ENCODE measurements at regions of chr11 and their contacts with region 1.

Region 1: DNA sequence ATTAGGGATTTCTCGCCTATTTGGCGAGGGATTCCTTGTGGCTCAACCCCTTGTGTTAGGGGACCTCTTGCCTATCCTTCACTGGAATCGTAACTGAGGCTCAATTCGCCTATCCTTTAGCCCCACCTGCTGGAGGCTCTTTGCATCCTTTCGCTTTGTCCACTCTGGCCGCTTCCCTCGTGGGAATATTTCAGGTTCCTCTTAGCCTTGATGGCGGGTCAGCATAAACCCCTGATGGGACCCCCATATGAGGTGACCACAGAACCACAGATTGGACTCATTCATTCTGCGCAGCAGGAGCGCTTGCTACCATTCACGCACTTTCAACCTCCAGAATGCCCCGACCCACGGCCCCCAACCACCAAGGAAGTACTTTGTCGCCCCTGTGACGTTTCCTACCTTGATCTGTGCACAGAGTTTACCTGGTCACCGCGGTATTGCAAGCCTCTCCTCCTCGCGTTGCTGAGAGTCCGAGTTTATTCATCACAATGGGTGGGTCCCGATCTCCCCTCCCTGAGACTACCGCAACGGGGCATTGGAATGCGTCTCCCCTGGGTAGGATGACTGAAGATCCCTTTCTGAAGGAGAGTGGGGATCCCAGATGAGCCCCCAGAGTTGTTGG is at the start of gene OR52N2:
- DNase-seq: no peak
- H3K4me3 ChIP-seq: peak within 1 kb of the TSS; percentile 48 to 59 (median 50)
- H3K27ac ChIP-seq: no peak within 1 kb of the TSS
- H3K4me1 ChIP-seq: peaks cover 0 to 11% (median 10%) of the 10 kb centered on the region in 4 donors
- H3K27me3 ChIP-seq: peaks cover 0 to 9% (median 0%) of the 10 kb centered on the region in 4 donors
- CTCF ChIP-seq: peak; percentile 80 to 85 (median 84)
- EP300 ChIP-seq: no peak
- POLR2A ChIP-seq: no peak
- total RNA-seq, gene OR52N2: not detected

Region 2: GRCh38 chr11:5123802-5124521 is 684.6 kb before region 1 on chr11:
- intact Hi-C with region 1: loop called (anchors 5 kb)
- DNase-seq: no peak
- H3K4me3 ChIP-seq: no peak overlapping the region
- H3K27ac ChIP-seq: no peak overlapping the region
- H3K4me1 ChIP-seq: peaks cover 0 to 4% (median 0%) of the 10 kb centered on the region in 4 donors
- H3K27me3 ChIP-seq: no peaks in the 10 kb centered on the region
- CTCF ChIP-seq: peak; percentile 54 to 84 (median 66)
- EP300 ChIP-seq: no peak
- POLR2A ChIP-seq: no peak

Region 3: GRCh38 chr11:5476184-5476819 is 332.3 kb before region 1 on chr11:
- intact Hi-C with region 1: loop called (anchors 1 kb)
- DNase-seq: no peak
- H3K4me3 ChIP-seq: no peak overlapping the region
- H3K27ac ChIP-seq: no peak overlapping the region
- H3K4me1 ChIP-seq: no peaks in the 10 kb centered on the region
- H3K27me3 ChIP-seq: no peaks in the 10 kb centered on the region
- CTCF ChIP-seq: peak; percentile 60 to 77 (median 62)
- EP300 ChIP-seq: no peak
- POLR2A ChIP-seq: no peak

Region 4: GRCh38 chr11:5575152-5575551 is 233.5 kb before region 1 on chr11:
- intact Hi-C with region 1: no loop called
- DNase-seq: no peak
- H3K4me3 ChIP-seq: no peak overlapping the region
- H3K27ac ChIP-seq: no peak overlapping the region
- H3K4me1 ChIP-seq: no peaks in the 10 kb centered on the region
- H3K27me3 ChIP-seq: no peaks in the 10 kb centered on the region
- CTCF ChIP-seq: no peak
- EP300 ChIP-seq: no peak
- POLR2A ChIP-seq: no peak

Region 5: GRCh38 chr11:5600374-5600851 is 208.2 kb before region 1 on chr11:
- intact Hi-C with region 1: loop called (anchors 10 kb)
- DNase-seq: no peak
- H3K4me3 ChIP-seq: no peak overlapping the region
- H3K27ac ChIP-seq: peak overlapping the region; percentile 61 to 74 (median 72)
- H3K4me1 ChIP-seq: peaks cover 4 to 44% (median 33%) of the 10 kb centered on the region in 4 donors
- H3K27me3 ChIP-seq: no peaks in the 10 kb centered on the region
- CTCF ChIP-seq: peak; percentile 61 to 89 (median 63)
- EP300 ChIP-seq: no peak
- POLR2A ChIP-seq: no peak

Region 6: DNA sequence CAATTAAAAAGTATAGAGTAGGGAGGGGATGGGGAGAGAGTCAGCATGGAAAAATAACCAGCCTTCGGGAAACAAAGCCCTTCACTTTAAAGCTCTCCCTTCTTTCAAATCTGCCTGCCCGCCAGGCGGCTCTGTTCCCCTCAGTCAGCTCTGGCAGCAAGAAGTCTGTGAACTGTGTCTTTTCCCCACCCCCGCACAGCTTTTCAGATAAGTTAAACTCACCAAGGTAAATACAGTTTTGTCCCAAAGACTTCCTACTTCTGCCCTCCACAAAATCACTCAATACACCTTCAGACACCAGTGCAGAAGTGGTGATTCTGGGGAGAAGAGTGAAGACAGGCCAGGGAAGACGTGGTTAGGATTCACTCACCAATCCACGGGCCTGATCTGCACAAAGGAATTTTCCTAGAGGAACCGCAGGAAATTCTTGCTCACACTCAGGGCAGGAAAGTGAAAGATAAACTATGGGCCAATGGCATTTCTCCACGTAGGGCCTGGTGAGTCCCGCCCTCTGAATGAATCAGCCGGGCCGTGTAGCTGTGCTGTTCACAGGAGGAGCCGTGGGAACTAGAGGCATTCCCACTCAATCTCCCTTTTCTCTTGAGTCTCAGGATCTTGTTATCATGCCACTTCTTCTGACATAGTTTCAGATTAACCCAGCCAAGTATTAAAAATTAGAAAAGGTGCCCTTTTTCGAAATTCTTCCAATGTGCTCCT is 123.8 kb before region 1 on chr11 and contains the start of gene TRIM5:
- intact Hi-C with region 1: loop called (anchors 10 kb)
- DNase-seq: peak; percentile 95
- H3K4me3 ChIP-seq: peak within 1 kb of the TSS; percentile 45 to 65 (median 54)
- H3K27ac ChIP-seq: peak within 1 kb of the TSS; percentile 79 to 87 (median 87)
- H3K4me1 ChIP-seq: peaks cover 10 to 45% (median 39%) of the 10 kb centered on the region in 4 donors
- H3K27me3 ChIP-seq: no peaks in the 10 kb centered on the region
- CTCF ChIP-seq: peak; percentile 62 to 69 (median 67)
- EP300 ChIP-seq: no peak
- POLR2A ChIP-seq: no peak
- total RNA-seq, gene TRIM5: 15.9 to 21.5 (median 16.6) TPM

Region 7: DNA sequence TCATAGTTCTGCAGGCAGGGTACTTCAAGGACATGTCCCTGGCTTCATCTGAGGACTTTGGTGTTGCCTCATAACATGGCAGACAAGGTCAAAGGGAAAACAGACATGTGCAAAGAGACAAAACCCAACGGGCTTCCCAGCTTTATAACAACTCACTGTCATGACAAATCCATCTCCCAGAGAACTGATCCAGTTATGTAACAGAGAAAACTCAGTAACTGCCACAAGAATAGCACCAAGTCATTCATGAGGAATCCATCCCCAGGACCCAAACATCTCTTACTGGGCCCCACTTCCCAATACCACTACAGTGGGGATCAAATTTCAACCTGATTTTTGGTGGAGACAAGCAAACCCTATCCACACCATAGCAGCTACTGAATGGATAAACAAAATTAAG is 41.6 kb before region 1 on chr11:
- intact Hi-C with region 1: no loop called
- DNase-seq: no peak
- H3K4me3 ChIP-seq: no peak overlapping the region
- H3K27ac ChIP-seq: no peak overlapping the region
- H3K4me1 ChIP-seq: no peaks in the 10 kb centered on the region
- H3K27me3 ChIP-seq: no peaks in the 10 kb centered on the region
- CTCF ChIP-seq: no peak
- EP300 ChIP-seq: no peak
- POLR2A ChIP-seq: no peak

Region 8: DNA sequence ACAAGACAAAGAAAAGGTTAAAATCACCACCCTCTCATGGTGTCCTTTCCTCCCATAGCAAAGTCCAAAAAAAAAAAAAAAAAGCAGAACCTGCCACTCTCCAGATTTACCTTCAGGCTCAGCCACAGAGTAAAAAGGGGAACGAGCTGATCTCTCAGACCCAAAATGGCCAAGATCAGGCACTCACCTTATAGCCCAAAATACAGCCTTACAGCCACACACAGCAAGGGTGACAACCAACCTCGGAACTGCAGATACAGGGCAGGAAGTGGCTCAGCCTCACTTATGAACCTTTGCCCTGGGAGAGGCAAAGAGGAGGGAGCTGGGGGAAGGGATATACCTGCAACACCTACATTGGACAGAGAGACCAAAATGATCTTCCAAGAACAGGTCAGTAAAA is 421.3 kb after region 1 on chr11:
- intact Hi-C with region 1: no loop called
- DNase-seq: no peak
- H3K4me3 ChIP-seq: no peak overlapping the region
- H3K27ac ChIP-seq: no peak overlapping the region
- H3K4me1 ChIP-seq: peaks cover 18 to 45% (median 37%) of the 10 kb centered on the region in 4 donors
- H3K27me3 ChIP-seq: no peaks in the 10 kb centered on the region
- CTCF ChIP-seq: no peak
- EP300 ChIP-seq: no peak
- POLR2A ChIP-seq: no peak

Region 9: DNA sequence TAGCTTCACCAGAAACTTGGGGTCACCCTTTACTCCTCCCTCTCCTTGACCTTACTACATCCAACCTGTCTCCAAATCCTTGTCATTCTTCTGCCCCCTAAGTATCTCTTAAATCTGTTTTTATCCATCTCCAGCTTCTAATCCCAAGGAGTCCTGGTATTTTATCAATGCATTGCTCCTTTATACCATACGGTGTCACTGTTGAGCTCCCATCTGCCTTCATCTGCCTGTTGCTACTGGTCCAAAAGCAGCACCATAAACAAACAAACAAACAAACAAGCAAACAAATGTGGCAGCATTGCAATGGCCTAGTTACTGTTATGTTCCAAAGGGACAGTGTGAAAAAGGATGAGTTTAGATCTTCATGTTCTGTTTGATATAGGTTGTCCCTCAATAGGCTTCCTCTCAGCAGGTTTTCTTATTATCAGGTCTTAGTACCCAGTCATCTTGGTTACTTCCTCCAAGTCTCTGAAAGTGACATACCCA is 722.7 kb after region 1 on chr11:
- intact Hi-C with region 1: no loop called
- DNase-seq: no peak
- H3K4me3 ChIP-seq: no peak overlapping the region
- H3K27ac ChIP-seq: no peak overlapping the region
- H3K4me1 ChIP-seq: no peaks in the 10 kb centered on the region
- H3K27me3 ChIP-seq: no peaks in the 10 kb centered on the region
- CTCF ChIP-seq: peak; percentile 60 to 82 (median 80)
- EP300 ChIP-seq: no peak
- POLR2A ChIP-seq: no peak